MCF 10A (cell line): ENCODE measurements at regions of chr15 and their contacts with region 1.

Region 1: DNA sequence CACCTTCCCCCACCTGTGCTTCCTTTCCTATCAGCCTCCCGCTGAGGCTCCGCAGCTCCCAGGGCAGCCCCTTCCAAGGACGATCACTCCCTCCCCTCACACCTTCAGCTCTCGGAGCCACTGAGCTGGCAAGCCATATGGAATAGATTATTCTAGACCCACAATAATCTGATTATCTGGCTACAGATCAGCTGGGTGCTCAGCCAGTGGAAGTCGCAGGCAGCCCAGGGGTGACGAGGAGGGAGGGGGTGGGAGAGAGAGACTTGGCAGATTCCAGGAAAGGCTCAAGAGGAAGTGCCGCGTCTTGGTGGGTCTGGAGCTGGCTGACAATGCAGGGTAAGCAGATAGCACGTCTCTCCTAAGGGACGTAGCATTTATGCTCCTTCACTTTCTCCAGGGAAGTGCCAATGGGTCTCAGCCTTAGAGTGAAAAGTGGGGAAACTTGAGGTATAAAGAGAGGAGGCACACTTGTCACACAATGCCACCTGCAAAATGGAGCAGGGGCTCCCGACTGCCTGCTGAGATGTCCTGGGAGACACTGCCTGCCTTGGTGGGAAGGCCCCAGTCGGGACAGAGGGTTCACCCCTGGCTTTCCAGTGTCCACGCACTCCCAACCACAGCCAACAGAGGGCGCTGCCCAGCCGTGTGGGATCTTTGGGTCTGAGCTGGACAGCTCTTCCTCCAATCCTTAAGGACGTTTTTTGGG is 9.4 kb upstream of the MESP1 start:
- DNase-seq: peak; percentile 89
- H3K4me3 Mint-ChIP-seq: no peak overlapping the region
- H3K27ac Mint-ChIP-seq: no peak overlapping the region
- H3K4me1 Mint-ChIP-seq: peaks cover 9% of the 10 kb centered on the region
- H3K27me3 Mint-ChIP-seq: no peaks in the 10 kb centered on the region
- CTCF ChIP-seq: peak; percentile 92

Region 2: GRCh38 chr15:89334510-89335288 is 425.8 kb before region 1 on chr15 and contains the start of gene POLG:
- CTCF ChIA-PET with region 1: no interaction called
- POLR2A ChIA-PET with region 1: no interaction called
- intact Hi-C with region 1: no loop called
- DNase-seq: peak; percentile 99
- H3K4me3 Mint-ChIP-seq: peak within 1 kb of the TSS; percentile 76
- H3K27ac Mint-ChIP-seq: peak within 1 kb of the TSS; percentile 68
- H3K4me1 Mint-ChIP-seq: peaks cover 22% of the 10 kb centered on the region
- H3K27me3 Mint-ChIP-seq: no peaks in the 10 kb centered on the region
- CTCF ChIP-seq: no peak
- total RNA-seq, gene POLG: 52.9 and 62.2 TPM in 2 replicates

Region 3: DNA sequence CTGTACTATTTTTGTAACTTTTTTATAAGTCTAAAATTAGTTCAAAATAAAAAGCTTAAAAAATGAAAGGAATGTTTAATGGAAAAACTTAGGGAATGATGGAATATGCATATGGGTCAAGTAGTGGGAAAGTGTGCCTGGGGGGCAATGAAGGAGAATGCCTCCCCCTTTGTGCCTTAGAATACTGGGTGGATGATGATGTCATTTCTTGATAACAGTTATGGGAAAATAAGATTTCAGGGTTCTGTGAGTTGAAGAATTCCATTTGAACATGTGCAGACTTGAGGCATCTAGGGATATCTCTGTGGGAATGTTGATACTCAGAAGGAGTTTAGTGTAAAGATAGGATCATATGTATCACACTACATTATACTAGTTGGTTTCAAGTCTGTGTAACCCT is 56.0 kb before region 1 on chr15:
- CTCF ChIA-PET with region 1: no interaction called
- POLR2A ChIA-PET with region 1: no interaction called
- intact Hi-C with region 1: no loop called
- DNase-seq: no peak
- H3K4me3 Mint-ChIP-seq: no peak overlapping the region
- H3K27ac Mint-ChIP-seq: no peak overlapping the region
- H3K4me1 Mint-ChIP-seq: no peaks in the 10 kb centered on the region
- H3K27me3 Mint-ChIP-seq: peaks cover 23% of the 10 kb centered on the region
- CTCF ChIP-seq: no peak

Region 4: DNA sequence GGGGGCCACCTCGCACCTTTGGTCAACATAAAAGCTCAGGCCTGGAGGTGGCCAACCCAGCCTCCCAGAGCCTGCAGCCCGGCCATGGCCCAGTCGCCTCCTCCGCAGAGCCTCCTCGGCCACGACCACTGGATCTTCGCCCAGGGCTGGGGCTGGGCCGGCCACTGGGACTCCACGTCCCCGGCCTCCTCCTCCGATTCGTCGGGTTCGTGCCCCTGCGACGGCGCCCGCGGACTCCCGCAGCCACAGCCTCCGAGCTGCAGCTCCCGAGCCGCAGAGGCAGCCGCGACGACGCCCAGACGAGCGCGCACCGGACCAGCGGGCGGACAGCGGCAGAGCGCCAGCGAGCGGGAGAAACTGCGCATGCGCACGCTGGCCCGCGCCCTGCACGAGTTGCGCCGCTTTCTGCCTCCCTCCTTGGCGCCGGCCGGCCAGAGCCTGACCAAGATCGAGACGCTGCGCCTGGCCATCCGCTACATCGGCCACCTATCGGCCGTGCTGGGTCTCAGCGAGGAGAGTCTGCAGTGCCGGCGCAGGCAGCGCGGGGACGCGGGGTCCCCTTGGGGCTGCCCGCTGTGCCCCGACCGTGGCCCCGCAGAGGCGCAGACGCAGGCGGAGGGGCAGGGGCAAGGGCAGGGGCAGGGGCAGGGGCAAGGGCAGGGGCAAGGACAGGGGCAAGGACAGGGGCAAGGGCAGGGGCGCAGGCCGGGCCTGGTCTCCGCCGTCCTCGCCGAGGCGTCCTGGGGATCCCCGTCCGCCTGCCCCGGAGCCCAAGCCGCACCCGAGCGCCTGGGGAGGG is 16.0 kb after region 1 on chr15 and contains the start of gene MESP2:
- CTCF ChIA-PET with region 1: interaction called, 44 read pairs
- POLR2A ChIA-PET with region 1: interaction called, 8 read pairs
- intact Hi-C with region 1: no loop called
- DNase-seq: peak; percentile 62
- H3K4me3 Mint-ChIP-seq: no peak within 1 kb of the TSS
- H3K27ac Mint-ChIP-seq: no peak within 1 kb of the TSS
- H3K4me1 Mint-ChIP-seq: peaks cover 14% of the 10 kb centered on the region
- H3K27me3 Mint-ChIP-seq: no peaks in the 10 kb centered on the region
- CTCF ChIP-seq: no peak
- total RNA-seq, gene MESP2: not detected in 2 replicates

Region 5: GRCh38 chr15:89812011-89812835 is 51.8 kb after region 1 on chr15:
- CTCF ChIA-PET with region 1: interaction called, 7 read pairs
- POLR2A ChIA-PET with region 1: interaction called, 3 read pairs
- intact Hi-C with region 1: loop called (anchors 2 kb)
- DNase-seq: peak; percentile 97
- H3K4me3 Mint-ChIP-seq: peak overlapping the region; percentile 89
- H3K27ac Mint-ChIP-seq: peak overlapping the region; percentile 88
- H3K4me1 Mint-ChIP-seq: peaks cover 33% of the 10 kb centered on the region
- H3K27me3 Mint-ChIP-seq: no peaks in the 10 kb centered on the region
- CTCF ChIP-seq: no peak

Region 6: GRCh38 chr15:89828241-89829082 is 68.0 kb after region 1 on chr15:
- CTCF ChIA-PET with region 1: interaction called, 12 read pairs
- POLR2A ChIA-PET with region 1: interaction called, 3 read pairs
- intact Hi-C with region 1: no loop called
- DNase-seq: peak; percentile 69
- H3K4me3 Mint-ChIP-seq: no peak overlapping the region
- H3K27ac Mint-ChIP-seq: peak overlapping the region; percentile 24
- H3K4me1 Mint-ChIP-seq: peaks cover 46% of the 10 kb centered on the region
- H3K27me3 Mint-ChIP-seq: no peaks in the 10 kb centered on the region
- CTCF ChIP-seq: no peak

Region 7: GRCh38 chr15:89845305-89845893 is 84.9 kb after region 1 on chr15:
- CTCF ChIA-PET with region 1: interaction called, 38 read pairs
- POLR2A ChIA-PET with region 1: interaction called, 4 read pairs
- intact Hi-C with region 1: no loop called
- DNase-seq: peak; percentile 88
- H3K4me3 Mint-ChIP-seq: no peak overlapping the region
- H3K27ac Mint-ChIP-seq: peak overlapping the region; percentile 80
- H3K4me1 Mint-ChIP-seq: peaks cover 48% of the 10 kb centered on the region
- H3K27me3 Mint-ChIP-seq: no peaks in the 10 kb centered on the region
- CTCF ChIP-seq: no peak

Region 8: DNA sequence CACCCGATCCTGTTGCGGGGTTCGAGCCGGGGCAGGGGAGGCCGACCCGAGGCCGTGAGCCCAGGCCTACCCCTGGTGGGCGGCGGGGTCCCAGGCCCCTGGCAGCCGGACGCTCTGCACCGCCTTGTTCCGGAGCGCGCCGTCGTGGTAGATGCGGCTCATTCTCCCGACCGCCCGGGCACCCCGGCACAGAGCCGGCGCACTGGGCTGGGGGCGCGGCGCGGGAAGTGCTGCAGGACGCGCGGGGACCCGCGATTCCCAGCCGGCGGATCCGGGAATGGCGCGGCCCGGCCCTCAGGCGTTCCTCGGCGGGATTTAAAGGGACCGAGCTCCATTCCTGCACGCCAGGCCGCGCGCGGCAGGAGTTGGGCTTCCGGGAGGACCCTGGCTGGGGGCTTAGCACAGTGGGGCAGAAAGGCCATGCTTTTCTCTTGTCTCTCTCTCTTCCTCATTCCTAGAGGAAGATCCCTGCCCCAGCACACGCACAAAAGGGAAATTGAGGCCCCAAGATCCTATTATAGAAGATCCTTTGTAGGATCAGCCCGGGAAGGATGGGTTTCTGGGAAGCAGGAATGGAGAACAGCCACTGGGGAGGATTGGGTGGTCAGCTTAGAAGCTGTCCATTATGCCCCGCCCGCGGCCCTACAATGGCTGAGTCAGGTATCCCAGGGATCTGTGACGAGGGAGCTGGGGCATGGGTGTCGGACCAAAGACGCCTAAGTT is 152.4 kb after region 1 on chr15 and contains the start of gene ARPIN:
- CTCF ChIA-PET with region 1: no interaction called
- POLR2A ChIA-PET with region 1: no interaction called
- intact Hi-C with region 1: no loop called
- DNase-seq: peak; percentile 52
- H3K4me3 Mint-ChIP-seq: peak within 1 kb of the TSS; percentile 76
- H3K27ac Mint-ChIP-seq: no peak within 1 kb of the TSS
- H3K4me1 Mint-ChIP-seq: peaks cover 27% of the 10 kb centered on the region
- H3K27me3 Mint-ChIP-seq: no peaks in the 10 kb centered on the region
- CTCF ChIP-seq: no peak
- total RNA-seq, gene ARPIN: 7.1 and 9.9 TPM in 2 replicates

Region 9: GRCh38 chr15:90086868-90087268 is 326.4 kb after region 1 on chr15:
- CTCF ChIA-PET with region 1: interaction called, 5 read pairs
- POLR2A ChIA-PET with region 1: no interaction called
- intact Hi-C with region 1: loop called (anchors 5 kb)
- DNase-seq: peak; percentile 76
- H3K4me3 Mint-ChIP-seq: no peak overlapping the region
- H3K27ac Mint-ChIP-seq: no peak overlapping the region
- H3K4me1 Mint-ChIP-seq: no peaks in the 10 kb centered on the region
- H3K27me3 Mint-ChIP-seq: no peaks in the 10 kb centered on the region
- CTCF ChIP-seq: peak; percentile 83